Endothelial cell of umbilical vein (primary cell): ENCODE measurements at regions of chr2 and their contacts with region 1.

Region 1: GRCh38 chr2:207546822-207547221 is 17.1 kb downstream of the CREB1 start:
- DNase-seq: no peak
- H3K4me3 ChIP-seq: no peak overlapping the region
- H3K27ac ChIP-seq: no peak overlapping the region
- H3K4me1 ChIP-seq: peaks cover 13% of the 10 kb centered on the region
- H3K27me3 ChIP-seq: no peaks in the 10 kb centered on the region
- CTCF ChIP-seq: no peak
- POLR2A ChIP-seq: no peak

Region 2: DNA sequence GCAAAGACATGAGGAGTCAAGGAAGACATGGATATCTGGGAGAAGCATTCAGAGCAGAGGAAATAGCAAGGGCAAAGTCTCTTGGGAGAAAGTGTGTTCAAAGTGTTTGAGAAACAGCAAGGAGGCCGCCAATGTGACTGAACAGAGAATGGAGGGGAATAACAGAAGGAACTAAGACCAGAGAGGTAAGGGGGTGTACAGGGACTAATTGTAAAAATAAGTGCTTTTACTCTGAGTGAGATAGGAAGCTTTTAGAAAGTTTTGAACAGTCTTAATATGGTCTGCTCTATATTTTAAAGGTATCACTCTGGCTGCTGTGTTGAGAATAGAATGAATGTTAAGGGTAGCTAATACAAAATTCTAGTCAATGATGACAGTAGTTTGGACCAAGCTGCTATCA is 23.8 kb before region 1 on chr2:
- CTCF ChIA-PET with region 1: no interaction called
- POLR2A ChIA-PET with region 1: no interaction called
- dilution Hi-C with region 1: no loop called
- intact Hi-C with region 1: no loop called
- DNase-seq: no peak
- H3K4me3 ChIP-seq: no peak overlapping the region
- H3K27ac ChIP-seq: no peak overlapping the region
- H3K4me1 ChIP-seq: peaks cover 7% of the 10 kb centered on the region
- H3K27me3 ChIP-seq: no peaks in the 10 kb centered on the region
- CTCF ChIP-seq: no peak
- POLR2A ChIP-seq: no peak

Region 3: DNA sequence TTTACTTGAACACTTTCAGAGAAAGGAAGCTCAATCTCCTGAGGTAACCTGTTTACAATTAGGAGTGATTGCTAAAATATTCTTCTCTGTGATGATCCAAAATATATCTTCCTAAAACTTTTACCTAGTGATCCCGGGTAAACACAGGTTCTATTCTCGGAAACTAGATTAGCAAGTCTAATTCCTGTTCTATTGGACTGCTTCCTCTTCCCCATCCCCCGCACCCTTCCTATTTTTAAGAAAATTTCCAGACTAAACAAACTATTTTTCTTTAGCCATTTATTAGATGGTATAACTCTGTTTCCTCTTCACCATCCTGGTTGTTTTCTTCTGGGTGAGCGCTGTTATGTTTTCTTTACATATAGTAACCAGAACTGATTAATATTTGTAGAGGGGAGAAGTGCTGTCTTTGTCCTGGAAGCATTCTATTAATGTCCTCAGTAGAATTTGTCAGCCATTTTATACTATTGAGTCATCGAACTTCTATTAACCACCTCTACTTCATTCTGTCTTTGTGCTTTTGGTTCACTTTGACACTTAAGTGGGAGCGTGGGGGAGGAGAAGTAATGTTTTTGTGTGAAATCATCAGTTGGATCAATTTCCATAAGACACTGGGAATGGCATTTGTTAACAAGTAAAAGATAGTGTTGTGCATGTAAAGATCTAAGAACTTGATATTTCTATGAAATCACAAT is 14.7 kb after region 1 on chr2:
- CTCF ChIA-PET with region 1: interaction called, 4 read pairs
- POLR2A ChIA-PET with region 1: no interaction called
- dilution Hi-C with region 1: no loop called
- intact Hi-C with region 1: loop called (anchors 1 kb)
- DNase-seq: peak; percentile 70
- H3K4me3 ChIP-seq: no peak overlapping the region
- H3K27ac ChIP-seq: peak overlapping the region; percentile 51
- H3K4me1 ChIP-seq: peaks cover 19% of the 10 kb centered on the region
- H3K27me3 ChIP-seq: no peaks in the 10 kb centered on the region
- CTCF ChIP-seq: no peak
- POLR2A ChIP-seq: no peak

Region 4: DNA sequence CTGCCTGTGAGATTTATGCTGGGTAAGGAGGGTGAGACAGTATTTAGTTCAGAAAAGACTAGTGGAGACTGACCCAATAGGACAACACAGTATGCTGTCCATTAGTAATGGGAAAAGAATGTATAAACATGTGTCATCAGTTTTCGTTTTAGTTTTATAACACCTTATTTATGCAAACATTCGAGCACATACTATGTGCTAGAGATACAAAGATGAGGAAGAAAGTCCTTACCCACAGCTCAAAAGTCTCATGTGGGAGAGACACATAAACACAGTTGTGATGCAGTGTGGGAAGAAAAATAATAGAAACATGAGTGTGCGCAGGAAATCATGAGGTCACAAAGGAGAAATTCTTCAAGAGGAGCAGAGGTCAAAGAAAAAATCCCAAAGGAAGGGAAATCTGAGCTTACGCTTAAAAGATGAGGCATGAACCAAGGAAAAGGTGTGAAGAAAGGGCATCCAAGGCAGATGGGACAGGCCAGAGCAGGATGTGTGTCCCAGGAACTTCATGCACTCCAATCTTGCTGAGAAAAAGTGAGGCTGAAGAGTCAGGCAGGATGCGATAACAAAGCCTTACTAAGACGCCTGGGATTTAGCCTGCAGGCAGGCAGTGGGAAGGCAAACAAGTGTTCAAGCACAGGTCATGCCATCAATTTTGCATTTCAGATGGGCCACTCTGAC is 70.3 kb after region 1 on chr2:
- CTCF ChIA-PET with region 1: interaction called, 3 read pairs
- POLR2A ChIA-PET with region 1: no interaction called
- dilution Hi-C with region 1: no loop called
- intact Hi-C with region 1: loop called (anchors 1 kb)
- DNase-seq: peak; percentile 92
- H3K4me3 ChIP-seq: peak overlapping the region in 1 of 3 experiments; percentile 2
- H3K27ac ChIP-seq: peak overlapping the region; percentile 73
- H3K4me1 ChIP-seq: peaks cover 18% of the 10 kb centered on the region
- H3K27me3 ChIP-seq: no peaks in the 10 kb centered on the region
- CTCF ChIP-seq: no peak
- POLR2A ChIP-seq: no peak